SK-N-SH (cell line): ENCODE measurements at regions of chr11 and their contacts with region 1.

Region 1: GRCh38 chr11:126440792-126441514 is 85.5 kb downstream of the ST3GAL4 start:
- DNase-seq: peak; percentile 94
- H3K4me3 ChIP-seq: no peak overlapping the region; a peak in 1 of 4 replicates
- H3K27ac ChIP-seq: no peak overlapping the region
- H3K4me1 ChIP-seq: peaks cover 0 to 20% of the 10 kb centered on the region in 2 experiments; a peak in 1 of 4 replicates
- H3K27me3 ChIP-seq: no peaks in the 10 kb centered on the region
- CTCF ChIP-seq: peak; percentile 95
- EP300 ChIP-seq: no peak
- RAD21 ChIP-seq: peak; percentile 96

Region 2: DNA sequence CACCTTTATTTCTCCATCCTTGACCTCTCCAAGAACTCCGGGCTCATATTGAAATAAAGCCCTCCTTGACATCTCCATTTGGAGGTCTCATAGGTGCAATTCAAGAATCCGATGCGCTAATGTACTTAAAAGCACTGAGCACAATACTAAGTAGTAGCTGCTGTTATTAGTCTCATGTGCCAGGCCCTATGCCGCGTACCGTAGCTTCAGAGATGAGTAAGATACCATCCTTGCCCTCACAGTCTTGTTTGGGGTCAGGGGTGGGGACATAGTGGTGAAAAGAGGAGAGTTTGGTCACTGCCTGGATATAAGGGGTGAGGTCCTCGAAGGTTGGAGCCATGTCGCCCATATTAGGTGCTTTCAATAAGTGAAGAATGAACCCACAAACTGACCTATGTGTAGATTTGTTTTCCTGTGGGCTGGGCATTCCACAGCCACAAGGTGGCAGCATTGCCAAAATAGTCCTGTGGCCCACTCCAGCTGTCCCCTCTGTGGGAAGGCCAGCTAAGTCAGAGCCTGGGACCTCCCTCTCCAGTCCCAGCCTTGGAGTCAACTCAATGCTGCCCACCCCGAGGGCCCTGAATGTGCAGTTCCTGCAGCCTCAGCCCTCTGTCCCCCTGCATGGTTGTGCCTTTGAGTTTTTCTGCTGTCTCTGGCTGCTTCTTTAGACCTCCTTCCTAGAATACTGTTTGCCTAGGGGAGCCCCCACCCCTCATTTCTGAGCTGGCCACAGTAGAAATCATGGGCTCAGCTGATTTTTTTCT is 130.5 kb before region 1 on chr11:
- CTCF ChIA-PET with region 1: interaction called, 41 read pairs
- POLR2A ChIA-PET with region 1: no interaction called
- DNase-seq: peak; percentile 81
- H3K4me3 ChIP-seq: no peak overlapping the region; a peak in 1 of 4 replicates
- H3K27ac ChIP-seq: no peak overlapping the region
- H3K4me1 ChIP-seq: peaks cover 4% of the 10 kb centered on the region in 2 experiments; a peak in 2 of 4 replicates
- H3K27me3 ChIP-seq: no peaks in the 10 kb centered on the region
- CTCF ChIP-seq: peak; percentile 93
- EP300 ChIP-seq: no peak
- RAD21 ChIP-seq: peak; percentile 98

Region 3: DNA sequence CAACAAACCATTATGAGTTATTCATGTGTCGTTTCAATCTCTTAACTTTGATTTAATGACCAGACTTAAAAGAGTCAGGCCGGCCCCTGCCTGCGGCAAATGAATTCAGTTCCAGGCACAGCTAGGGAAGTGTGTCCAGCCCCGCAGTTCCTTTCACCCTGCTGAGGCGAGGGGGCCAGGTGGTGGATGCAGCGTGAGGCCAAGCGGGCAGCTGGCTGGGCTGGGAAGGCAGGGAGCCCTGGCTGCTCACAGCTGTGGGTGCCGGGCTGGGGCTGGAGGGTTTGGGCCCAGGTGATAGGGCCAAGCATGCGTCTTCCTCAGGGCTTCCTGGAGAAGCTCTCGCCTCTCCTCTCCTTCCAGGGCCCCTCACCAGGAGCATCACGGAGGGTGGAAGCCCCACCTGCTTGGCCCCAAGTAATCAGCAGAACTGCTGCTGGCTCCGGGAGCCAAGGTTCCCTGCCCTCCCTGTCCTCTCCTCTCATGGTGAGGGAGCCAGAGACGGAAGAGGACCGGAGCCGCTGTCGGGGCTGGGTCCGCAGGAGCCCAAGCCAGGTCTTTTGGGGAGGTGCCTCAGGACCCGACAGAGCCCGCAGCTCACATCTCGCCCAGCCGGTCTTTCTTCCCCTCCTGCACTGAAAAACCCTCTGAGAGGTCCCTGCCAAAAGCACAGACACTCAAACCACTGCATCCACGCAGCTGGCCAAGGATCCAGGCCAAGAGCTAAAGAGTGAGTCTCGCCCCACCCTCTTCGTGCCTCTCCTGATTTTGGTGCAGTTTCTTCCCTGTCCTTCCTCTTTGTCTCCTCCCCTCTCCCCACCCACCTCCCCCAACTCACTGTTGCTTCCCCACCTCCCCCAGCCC is 11.5 kb after region 1 on chr11:
- CTCF ChIA-PET with region 1: interaction called, 44 read pairs
- POLR2A ChIA-PET with region 1: interaction called, 3 read pairs
- DNase-seq: peak; percentile 75
- H3K4me3 ChIP-seq: no peak overlapping the region
- H3K27ac ChIP-seq: no peak overlapping the region
- H3K4me1 ChIP-seq: peaks cover 0 to 28% of the 10 kb centered on the region in 2 experiments; a peak in 1 of 4 replicates
- H3K27me3 ChIP-seq: no peaks in the 10 kb centered on the region
- CTCF ChIP-seq: no peak
- EP300 ChIP-seq: no peak
- RAD21 ChIP-seq: no peak

Region 4: DNA sequence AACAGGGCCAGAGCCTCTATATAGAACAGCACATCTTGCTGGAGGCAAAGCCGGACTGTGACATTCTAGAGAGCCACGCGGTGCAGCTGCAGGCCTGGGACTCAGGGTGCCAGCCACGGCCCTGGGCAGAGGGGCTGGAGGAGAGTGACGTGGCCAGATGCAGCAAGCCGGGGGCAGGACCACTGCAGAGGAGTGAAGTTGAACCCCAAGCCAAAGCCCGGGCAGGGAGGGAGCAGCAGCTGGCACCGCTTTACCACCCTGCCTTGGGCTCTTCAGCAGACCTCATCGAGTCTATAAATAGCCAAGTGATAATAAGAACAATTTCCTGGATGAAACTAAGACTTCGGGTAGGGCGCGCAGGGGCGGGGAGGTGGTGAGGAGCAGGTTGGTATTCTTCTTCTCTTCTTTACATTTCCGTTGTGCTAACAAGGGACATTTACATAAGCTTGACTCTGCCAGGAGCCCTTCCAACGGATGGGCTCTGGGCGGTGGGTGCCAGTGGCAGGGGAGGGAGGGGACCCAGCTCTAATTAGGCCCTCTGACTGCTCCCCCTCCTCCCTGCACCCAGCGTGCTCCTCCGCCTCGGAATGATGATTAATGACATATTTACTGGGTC is 24.7 kb after region 1 on chr11:
- CTCF ChIA-PET with region 1: interaction called, 25 read pairs
- POLR2A ChIA-PET with region 1: no interaction called
- DNase-seq: peak; percentile 57
- H3K4me3 ChIP-seq: no peak overlapping the region
- H3K27ac ChIP-seq: no peak overlapping the region
- H3K4me1 ChIP-seq: peaks cover 8 to 18% of the 10 kb centered on the region in 2 experiments; a peak in 2 of 4 replicates
- H3K27me3 ChIP-seq: no peaks in the 10 kb centered on the region
- CTCF ChIP-seq: no peak
- EP300 ChIP-seq: no peak
- RAD21 ChIP-seq: no peak

Region 5: GRCh38 chr11:126496576-126497337 is 55.8 kb after region 1 on chr11:
- CTCF ChIA-PET with region 1: interaction called, 10 read pairs
- POLR2A ChIA-PET with region 1: no interaction called
- DNase-seq: no peak
- H3K4me3 ChIP-seq: no peak overlapping the region
- H3K27ac ChIP-seq: no peak overlapping the region; a peak in 1 of 4 replicates
- H3K4me1 ChIP-seq: peaks cover 0 to 27% of the 10 kb centered on the region in 2 experiments; a peak in 2 of 4 replicates
- H3K27me3 ChIP-seq: no peaks in the 10 kb centered on the region
- CTCF ChIP-seq: no peak
- EP300 ChIP-seq: no peak
- RAD21 ChIP-seq: no peak

Region 6: GRCh38 chr11:127345819-127346459 is 905.0 kb after region 1 on chr11:
- CTCF ChIA-PET with region 1: interaction called, 10 read pairs
- POLR2A ChIA-PET with region 1: no interaction called
- DNase-seq: peak; percentile 66
- H3K4me3 ChIP-seq: peak overlapping the region in 1 of 2 experiments; percentile 18; a peak in 1 of 4 replicates
- H3K27ac ChIP-seq: no peak overlapping the region
- H3K4me1 ChIP-seq: no peaks in the 10 kb centered on the region
- H3K27me3 ChIP-seq: no peaks in the 10 kb centered on the region
- CTCF ChIP-seq: peak; percentile 77
- EP300 ChIP-seq: no peak
- RAD21 ChIP-seq: peak; percentile 69